ENCODE measurements at regions of chr1 and their contacts with region 1.

Region 1: GRCh38 chr1:103514920-103515503 is 10.5 kb upstream of the RNPC3 start:
- DNase-seq: peak; percentile 15
- ATAC-seq: peak; percentile 59
- H3K4me3 Mint-ChIP-seq: no peak overlapping the region
- H3K27ac Mint-ChIP-seq: no peak overlapping the region
- H3K4me1 Mint-ChIP-seq: peaks cover 26% of the 10 kb centered on the region
- H3K27me3 Mint-ChIP-seq: no peaks in the 10 kb centered on the region

Region 2: GRCh38 chr1:102970498-102971078 is 544.4 kb before region 1 on chr1:
- CTCF ChIA-PET with region 1: no interaction called
- POLR2A ChIA-PET with region 1: no interaction called
- intact Hi-C with region 1: loop called in 1 of 2 experiments (anchors 2 kb)
- DNase-seq: peak; percentile 15
- ATAC-seq: no peak
- H3K4me3 Mint-ChIP-seq: no peak overlapping the region
- H3K27ac Mint-ChIP-seq: no peak overlapping the region
- H3K4me1 Mint-ChIP-seq: no peaks in the 10 kb centered on the region
- H3K27me3 Mint-ChIP-seq: no peaks in the 10 kb centered on the region

Region 3: DNA sequence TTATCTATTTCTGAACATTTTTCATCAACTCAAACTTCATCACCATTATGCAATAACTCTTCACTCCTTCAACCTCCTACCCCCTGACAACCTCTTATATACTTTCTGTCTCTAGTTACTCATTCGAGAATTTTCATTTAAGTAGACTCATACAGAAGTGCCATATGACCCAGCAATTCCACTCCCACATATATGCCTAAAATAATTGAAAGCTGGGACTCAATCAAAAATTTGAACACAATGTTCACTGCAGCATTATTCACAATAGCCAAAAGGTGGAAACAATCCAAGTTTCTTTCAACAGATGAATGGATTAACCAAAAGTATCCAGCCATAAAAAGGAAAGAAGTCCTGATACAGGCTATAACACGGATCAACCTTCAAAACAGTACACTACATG is 430.8 kb before region 1 on chr1:
- CTCF ChIA-PET with region 1: no interaction called
- POLR2A ChIA-PET with region 1: no interaction called
- intact Hi-C with region 1: no loop called
- DNase-seq: no peak
- ATAC-seq: no peak
- H3K4me3 Mint-ChIP-seq: no peak overlapping the region
- H3K27ac Mint-ChIP-seq: no peak overlapping the region
- H3K4me1 Mint-ChIP-seq: no peaks in the 10 kb centered on the region
- H3K27me3 Mint-ChIP-seq: no peaks in the 10 kb centered on the region

Region 4: DNA sequence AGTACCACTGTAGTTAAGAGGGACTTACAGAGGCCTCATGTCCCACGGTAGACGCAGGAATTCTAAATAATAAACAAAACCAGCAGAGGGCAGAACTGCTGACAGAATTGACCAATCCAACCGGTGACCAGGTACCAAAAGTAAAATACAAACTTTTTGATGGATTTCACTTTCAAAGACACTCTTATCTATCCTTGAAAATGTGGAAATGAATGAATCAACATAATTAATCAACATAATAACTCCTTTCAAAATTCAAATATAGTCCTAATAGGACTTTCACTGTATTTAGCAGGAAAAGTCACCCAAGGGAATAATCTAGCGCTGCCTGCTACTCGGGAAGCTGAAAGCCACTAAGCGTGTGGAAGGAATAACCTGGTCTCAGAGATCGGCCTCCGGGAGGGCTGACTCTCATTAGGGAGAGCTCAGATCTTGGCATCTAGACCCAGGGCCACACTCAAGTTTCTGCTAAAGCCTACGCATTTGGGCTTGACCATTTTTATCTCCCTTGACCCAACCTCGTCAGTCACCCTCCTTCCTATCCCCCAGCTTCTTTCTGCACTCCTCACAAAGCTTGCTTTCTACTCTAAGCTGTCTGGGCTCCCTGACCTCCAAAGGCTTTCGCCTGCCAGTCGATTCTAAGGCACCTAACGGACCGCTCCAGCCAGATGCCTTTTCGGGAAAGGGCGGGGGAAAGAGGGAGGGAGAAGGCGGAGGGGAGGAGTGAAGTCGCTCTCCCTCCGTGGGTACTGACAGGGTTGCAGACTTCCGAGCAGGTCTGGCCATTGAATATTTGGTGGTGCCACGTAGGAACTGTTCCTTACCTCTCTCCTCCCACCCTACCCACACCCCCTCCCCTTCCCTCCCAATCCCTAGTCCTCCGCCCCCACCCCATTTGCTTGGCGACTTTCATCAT is 408.3 kb before region 1 on chr1:
- CTCF ChIA-PET with region 1: no interaction called
- POLR2A ChIA-PET with region 1: no interaction called
- intact Hi-C with region 1: loop called (anchors 1 kb)
- DNase-seq: peak; percentile 6
- ATAC-seq: no peak
- H3K4me3 Mint-ChIP-seq: no peak overlapping the region
- H3K27ac Mint-ChIP-seq: no peak overlapping the region
- H3K4me1 Mint-ChIP-seq: peaks cover 7% of the 10 kb centered on the region
- H3K27me3 Mint-ChIP-seq: peaks cover 18% of the 10 kb centered on the region

Region 5: GRCh38 chr1:103365860-103366569 is 149.0 kb before region 1 on chr1:
- CTCF ChIA-PET with region 1: no interaction called
- POLR2A ChIA-PET with region 1: no interaction called
- intact Hi-C with region 1: loop called in 1 of 2 experiments (anchors 10 kb)
- DNase-seq: no peak
- ATAC-seq: peak; percentile 72
- H3K4me3 Mint-ChIP-seq: no peak overlapping the region
- H3K27ac Mint-ChIP-seq: no peak overlapping the region
- H3K4me1 Mint-ChIP-seq: no peaks in the 10 kb centered on the region
- H3K27me3 Mint-ChIP-seq: peaks cover 2% of the 10 kb centered on the region

Region 6: GRCh38 chr1:103525607-103526507 is 10.8 kb after region 1 on chr1 and contains the start of gene RNPC3:
- CTCF ChIA-PET with region 1: interaction called, 17 read pairs
- POLR2A ChIA-PET with region 1: no interaction called
- intact Hi-C with region 1: loop called in 1 of 2 experiments (anchors 1 kb)
- DNase-seq: peak; percentile 92
- ATAC-seq: peak; percentile 68
- H3K4me3 Mint-ChIP-seq: peak within 1 kb of the TSS; percentile 94
- H3K27ac Mint-ChIP-seq: peak within 1 kb of the TSS; percentile 99
- H3K4me1 Mint-ChIP-seq: peaks cover 48% of the 10 kb centered on the region
- H3K27me3 Mint-ChIP-seq: peaks cover 5% of the 10 kb centered on the region
- total RNA-seq, gene RNPC3: 18.1 to 28.4 TPM